ENCODE measurements at regions of chr1 and their contacts with region 1.

Region 1: GRCh38 chr1:155978325-155978972 is at the start of gene ARHGEF2:
- DNase-seq: no peak
- ATAC-seq: peak; percentile 47
- H3K4me3 ChIP-seq: peak within 1 kb of the TSS; percentile 85 to 92 (median 90)
- H3K27ac ChIP-seq: peak within 1 kb of the TSS; percentile 56
- H3K4me1 ChIP-seq: peaks cover 83% of the 10 kb centered on the region
- H3K27me3 ChIP-seq: no peaks in the 10 kb centered on the region; a peak in 1 of 5 replicates
- CTCF ChIP-seq: peak; percentile 63
- EP300 ChIP-seq: no peak
- POLR2A ChIP-seq: peak in 1 of 2 experiments; percentile 60; a peak in 2 of 4 replicates
- RAD21 ChIP-seq: no peak
- total RNA-seq, gene ARHGEF2: 15.0 and 16.1 TPM in 2 replicates

Region 2: DNA sequence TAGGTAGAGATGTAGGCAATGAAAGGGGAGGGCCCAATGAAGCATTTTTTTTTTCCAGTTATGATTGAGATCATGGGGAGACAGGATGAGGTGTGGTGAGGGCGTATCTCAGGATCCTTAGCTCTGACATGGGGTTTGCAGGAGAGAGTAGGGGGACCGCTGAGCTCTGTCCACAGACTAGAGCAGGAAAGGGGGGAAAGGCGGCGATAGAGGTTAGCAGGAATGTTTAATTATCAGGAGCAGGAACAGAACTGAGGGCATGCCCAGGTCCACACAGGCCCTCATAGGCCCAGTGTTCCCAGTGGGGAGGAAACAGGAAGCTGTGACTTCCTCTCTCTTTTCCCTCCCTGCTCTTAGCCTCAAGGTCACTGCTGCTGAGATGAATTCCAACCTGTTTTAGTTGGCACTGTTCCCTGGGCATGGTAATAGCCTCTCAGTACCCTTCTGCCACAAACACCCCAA is 37.9 kb before region 1 on chr1:
- CTCF ChIA-PET with region 1: interaction called, 4 read pairs
- POLR2A ChIA-PET with region 1: interaction called, 390 read pairs
- in situ Hi-C with region 1: loop called (anchors 10 kb)
- intact Hi-C with region 1: loop called (anchors 5 kb)
- DNase-seq: peak; percentile 86
- ATAC-seq: peak; percentile 65
- H3K4me3 ChIP-seq: peak overlapping the region; percentile 50 to 65 (median 54); a peak in 5 of 6 replicates
- H3K27ac ChIP-seq: peak overlapping the region; percentile 84
- H3K4me1 ChIP-seq: peaks cover 71% of the 10 kb centered on the region
- H3K27me3 ChIP-seq: no peaks in the 10 kb centered on the region
- CTCF ChIP-seq: peak; percentile 4; the same call in 1 of the 2 replicates
- EP300 ChIP-seq: 0 out of 4 replicates have a peak, but pooled peaks of 1 of the 2 experiments have one; percentile 29
- POLR2A ChIP-seq: peak; percentile 45 to 64
- RAD21 ChIP-seq: no peak

Region 3: DNA sequence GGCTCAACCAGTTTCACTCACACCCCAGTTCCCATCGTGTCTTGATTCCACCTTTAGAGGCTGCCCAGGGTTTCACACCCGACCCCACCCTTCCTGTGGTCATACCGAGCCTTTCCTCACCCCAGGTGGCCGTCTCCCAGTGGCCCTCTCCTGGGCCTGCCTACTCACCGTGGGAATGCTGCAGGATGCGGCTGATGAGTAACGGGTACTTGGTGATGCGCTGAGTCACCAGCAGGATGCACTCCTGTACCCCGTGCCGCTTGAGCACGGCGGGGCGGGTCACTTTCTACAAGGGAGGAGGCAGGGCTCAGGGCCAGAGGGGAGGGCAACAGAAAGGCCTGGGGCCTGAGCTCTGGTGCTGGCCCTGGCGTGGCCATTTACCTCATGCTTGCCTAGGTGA is 16.5 kb before region 1 on chr1:
- CTCF ChIA-PET with region 1: no interaction called
- POLR2A ChIA-PET with region 1: interaction called, 64 read pairs
- in situ Hi-C with region 1: no loop called
- intact Hi-C with region 1: loop called (anchors 1 kb)
- DNase-seq: no peak
- ATAC-seq: peak; percentile 31; the same call in 2 of the 3 replicates
- H3K4me3 ChIP-seq: no peak overlapping the region
- H3K27ac ChIP-seq: no peak overlapping the region
- H3K4me1 ChIP-seq: peaks cover 12% of the 10 kb centered on the region
- H3K27me3 ChIP-seq: no peaks in the 10 kb centered on the region
- CTCF ChIP-seq: peak; percentile 17; the same call in 1 of the 2 replicates
- EP300 ChIP-seq: no peak
- POLR2A ChIP-seq: no peak
- RAD21 ChIP-seq: no peak

Region 4: DNA sequence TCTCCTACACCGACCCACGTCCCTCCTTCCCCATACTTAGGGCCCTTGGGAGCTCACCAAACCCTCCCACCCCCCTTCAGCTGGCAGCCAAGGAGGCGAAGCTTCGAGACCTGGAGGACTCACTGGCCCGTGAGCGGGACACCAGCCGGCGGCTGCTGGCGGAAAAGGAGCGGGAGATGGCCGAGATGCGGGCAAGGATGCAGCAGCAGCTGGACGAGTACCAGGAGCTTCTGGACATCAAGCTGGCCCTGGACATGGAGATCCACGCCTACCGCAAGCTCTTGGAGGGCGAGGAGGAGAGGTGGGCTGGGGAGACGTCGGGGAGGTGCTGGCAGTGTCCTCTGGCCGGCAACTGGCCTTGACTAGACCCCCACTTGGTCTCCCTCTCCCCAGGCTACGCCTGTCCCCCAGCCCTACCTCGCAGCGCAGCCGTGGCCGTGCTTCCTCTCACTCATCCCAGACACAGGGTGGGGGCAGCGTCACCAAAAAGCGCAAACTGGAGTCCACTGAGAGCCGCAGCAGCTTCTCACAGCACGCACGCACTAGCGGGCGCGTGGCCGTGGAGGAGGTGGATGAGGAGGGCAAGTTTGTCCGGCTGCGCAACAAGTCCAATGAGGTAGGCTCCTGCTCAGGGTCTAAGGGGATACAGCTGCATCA is 157.5 kb after region 1 on chr1:
- CTCF ChIA-PET with region 1: no interaction called
- POLR2A ChIA-PET with region 1: no interaction called
- in situ Hi-C with region 1: no loop called
- intact Hi-C with region 1: no loop called
- DNase-seq: no peak
- ATAC-seq: no peak
- H3K4me3 ChIP-seq: no peak overlapping the region
- H3K27ac ChIP-seq: no peak overlapping the region
- H3K4me1 ChIP-seq: peaks cover 3% of the 10 kb centered on the region
- H3K27me3 ChIP-seq: no peaks in the 10 kb centered on the region
- CTCF ChIP-seq: no peak
- EP300 ChIP-seq: no peak
- POLR2A ChIP-seq: no peak
- RAD21 ChIP-seq: no peak

Measured in HepG2 (cell line).